ENCODE measurements at regions of chr22 and their contacts with region 1.

Region 1: GRCh38 chr22:20965104-20965887 is 1.8 kb upstream of the AIFM3 start:
- DNase-seq: peak in 2 of 3 donors; percentile 53 to 65
- ATAC-seq: no peak
- H3K4me3 ChIP-seq: peak overlapping the region; percentile 37
- H3K27ac ChIP-seq: no peak overlapping the region
- H3K4me1 ChIP-seq: no peaks in the 10 kb centered on the region
- H3K27me3 ChIP-seq: no peaks in the 10 kb centered on the region

Region 2: DNA sequence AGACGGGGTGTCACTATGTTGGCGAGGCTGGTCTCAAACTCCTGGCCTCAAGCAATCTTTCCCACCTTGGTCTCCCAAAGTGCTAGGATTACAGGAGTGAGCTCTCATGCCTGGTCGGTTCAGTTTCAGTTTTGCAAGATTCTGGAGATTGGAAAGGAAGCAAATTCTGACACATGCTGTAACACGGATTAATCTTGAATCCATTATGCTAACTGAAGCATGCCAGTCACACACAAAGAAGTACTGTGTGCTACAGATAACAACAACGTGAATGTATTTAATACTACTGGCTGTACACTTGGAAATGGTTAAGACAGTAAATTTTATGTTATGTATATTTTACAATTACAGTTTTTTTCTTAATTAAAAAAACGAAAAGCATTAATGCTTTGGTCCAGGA is 350.3 kb before region 1 on chr22:
- intact Hi-C with region 1: no loop called
- DNase-seq: no peak
- ATAC-seq: no peak
- H3K4me3 ChIP-seq: no peak overlapping the region
- H3K27ac ChIP-seq: no peak overlapping the region
- H3K4me1 ChIP-seq: no peaks in the 10 kb centered on the region
- H3K27me3 ChIP-seq: no peaks in the 10 kb centered on the region

Region 3: GRCh38 chr22:20904008-20904979 is 61.0 kb before region 1 on chr22:
- intact Hi-C with region 1: loop called in 1 of 4 experiments (anchors 10 kb)
- DNase-seq: no peak
- ATAC-seq: peak in 1 of 2 donors; percentile 85
- H3K4me3 ChIP-seq: no peak overlapping the region
- H3K27ac ChIP-seq: no peak overlapping the region
- H3K4me1 ChIP-seq: no peaks in the 10 kb centered on the region
- H3K27me3 ChIP-seq: no peaks in the 10 kb centered on the region

Measured in right cardiac atrium (tissue), 5 donors.